CD4-positive, alpha-beta T cell (primary cell): ENCODE measurements at regions of chr5 and their contacts with region 1.

Region 1: GRCh38 chr5:56270568-56271392 is 37.6 kb upstream of the ANKRD55 start:
- DNase-seq: peak; percentile 57 to 88 (median 71)
- ATAC-seq: peak; percentile 97
- H3K4me3 ChIP-seq: peak overlapping the region; percentile 1
- H3K4me3 Mint-ChIP-seq: peak overlapping the region; percentile 60
- H3K27ac ChIP-seq: no peak overlapping the region
- H3K27ac Mint-ChIP-seq: peak overlapping the region; percentile 24
- H3K4me1 ChIP-seq: peaks cover 11% of the 10 kb centered on the region
- H3K4me1 Mint-ChIP-seq: peaks cover 19% of the 10 kb centered on the region
- H3K27me3 ChIP-seq: no peaks in the 10 kb centered on the region
- H3K27me3 Mint-ChIP-seq: no peaks in the 10 kb centered on the region
- CTCF ChIP-seq: peak; percentile 98

Region 2: GRCh38 chr5:55936100-55936693 is 334.6 kb before region 1 on chr5:
- CTCF ChIA-PET with region 1: interaction called, 3 read pairs
- POLR2A ChIA-PET with region 1: no interaction called
- intact Hi-C with region 1: loop called (anchors 2 to 5 kb)
- DNase-seq: peak; percentile 64 to 90 (median 71)
- ATAC-seq: peak; percentile 77
- H3K4me3 ChIP-seq: no peak overlapping the region
- H3K4me3 Mint-ChIP-seq: peak overlapping the region; percentile 25
- H3K27ac ChIP-seq: no peak overlapping the region
- H3K27ac Mint-ChIP-seq: peak overlapping the region; percentile 62
- H3K4me1 ChIP-seq: no peaks in the 10 kb centered on the region
- H3K4me1 Mint-ChIP-seq: peaks cover 46% of the 10 kb centered on the region
- H3K27me3 ChIP-seq: no peaks in the 10 kb centered on the region
- H3K27me3 Mint-ChIP-seq: no peaks in the 10 kb centered on the region
- CTCF ChIP-seq: peak; percentile 84

Region 3: GRCh38 chr5:56481428-56482357 is 210.9 kb after region 1 on chr5:
- CTCF ChIA-PET with region 1: interaction called, 5 read pairs
- POLR2A ChIA-PET with region 1: interaction called, 4 read pairs
- intact Hi-C with region 1: loop called (anchors 5 kb)
- DNase-seq: peak in 9 of 14 experiments; percentile 8 to 58 (median 31)
- ATAC-seq: no peak
- H3K4me3 ChIP-seq: peak overlapping the region; percentile 69
- H3K4me3 Mint-ChIP-seq: peak overlapping the region; percentile 94
- H3K27ac ChIP-seq: peak overlapping the region; percentile 80
- H3K27ac Mint-ChIP-seq: peak overlapping the region; percentile 89
- H3K4me1 ChIP-seq: peaks cover 52% of the 10 kb centered on the region
- H3K4me1 Mint-ChIP-seq: peaks cover 49% of the 10 kb centered on the region
- H3K27me3 ChIP-seq: no peaks in the 10 kb centered on the region
- H3K27me3 Mint-ChIP-seq: no peaks in the 10 kb centered on the region
- CTCF ChIP-seq: peak; percentile 46

Region 4: DNA sequence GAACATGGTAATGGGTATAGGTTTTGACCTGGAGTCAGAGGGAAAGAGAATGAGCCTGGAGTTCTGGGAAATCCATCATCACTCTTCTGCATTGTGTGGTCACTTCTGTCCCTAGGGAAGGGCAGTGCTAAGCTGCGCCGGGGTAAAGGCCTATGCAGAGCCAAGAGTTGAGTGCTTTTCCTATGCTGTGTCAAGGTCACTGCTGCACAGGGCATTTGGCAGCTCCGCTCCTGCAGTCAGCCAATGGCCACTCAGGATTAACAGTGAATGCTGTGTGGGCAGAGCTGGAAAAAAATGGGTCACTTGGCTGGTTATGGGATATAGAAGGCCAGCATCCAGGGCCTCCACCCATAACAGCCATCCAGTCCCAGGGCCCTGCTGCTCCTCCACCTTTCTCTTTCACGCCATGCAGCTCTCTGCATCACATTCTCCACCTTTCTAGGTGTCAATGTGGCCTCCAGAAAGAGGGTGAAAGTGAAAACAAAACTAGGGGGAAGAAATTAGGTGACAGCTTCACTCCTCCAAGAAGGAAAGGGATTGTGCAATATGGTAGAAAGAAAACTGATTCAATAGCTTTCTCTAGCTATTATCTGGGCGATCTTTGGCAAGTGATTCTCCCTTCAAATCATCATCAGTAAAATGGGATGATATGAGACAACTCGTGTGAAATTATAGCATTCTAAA is 241.7 kb after region 1 on chr5:
- CTCF ChIA-PET with region 1: no interaction called
- POLR2A ChIA-PET with region 1: no interaction called
- intact Hi-C with region 1: no loop called
- DNase-seq: no peak
- ATAC-seq: no peak
- H3K4me3 ChIP-seq: no peak overlapping the region
- H3K4me3 Mint-ChIP-seq: no peak overlapping the region
- H3K27ac ChIP-seq: no peak overlapping the region
- H3K27ac Mint-ChIP-seq: no peak overlapping the region
- H3K4me1 ChIP-seq: peaks cover 13% of the 10 kb centered on the region
- H3K4me1 Mint-ChIP-seq: peaks cover 31% of the 10 kb centered on the region
- H3K27me3 ChIP-seq: no peaks in the 10 kb centered on the region
- H3K27me3 Mint-ChIP-seq: no peaks in the 10 kb centered on the region
- CTCF ChIP-seq: no peak

Region 5: GRCh38 chr5:56852228-56853000 is 581.6 kb after region 1 on chr5:
- CTCF ChIA-PET with region 1: interaction called, 7 read pairs
- POLR2A ChIA-PET with region 1: interaction called, 3 read pairs
- intact Hi-C with region 1: loop called in 1 of 2 experiments (anchors 1 kb)
- DNase-seq: peak in 2 of 14 experiments; percentile 33 to 56
- ATAC-seq: peak; percentile 51
- H3K4me3 ChIP-seq: peak overlapping the region; percentile 2
- H3K4me3 Mint-ChIP-seq: peak overlapping the region; percentile 50
- H3K27ac ChIP-seq: peak overlapping the region in 1 of 2 donors; percentile 30
- H3K27ac Mint-ChIP-seq: peak overlapping the region; percentile 43
- H3K4me1 ChIP-seq: peaks cover 46% of the 10 kb centered on the region
- H3K4me1 Mint-ChIP-seq: peaks cover 94% of the 10 kb centered on the region
- H3K27me3 ChIP-seq: no peaks in the 10 kb centered on the region
- H3K27me3 Mint-ChIP-seq: no peaks in the 10 kb centered on the region
- CTCF ChIP-seq: no peak

Region 6: GRCh38 chr5:57221049-57221568 is 950.3 kb after region 1 on chr5:
- CTCF ChIA-PET with region 1: no interaction called
- POLR2A ChIA-PET with region 1: no interaction called
- intact Hi-C with region 1: loop called (anchors 1 to 2 kb)
- DNase-seq: peak in 5 of 14 experiments; percentile 9 to 86 (median 78)
- ATAC-seq: peak; percentile 85
- H3K4me3 ChIP-seq: no peak overlapping the region
- H3K4me3 Mint-ChIP-seq: no peak overlapping the region
- H3K27ac ChIP-seq: no peak overlapping the region
- H3K27ac Mint-ChIP-seq: peak overlapping the region; percentile 59
- H3K4me1 ChIP-seq: peaks cover 14% of the 10 kb centered on the region
- H3K4me1 Mint-ChIP-seq: peaks cover 68% of the 10 kb centered on the region
- H3K27me3 ChIP-seq: no peaks in the 10 kb centered on the region
- H3K27me3 Mint-ChIP-seq: no peaks in the 10 kb centered on the region
- CTCF ChIP-seq: peak; percentile 95